WTC11 (cell line): ENCODE measurements at regions of chr11 and their contacts with region 1.

Region 1: GRCh38 chr11:73350908-73351636 is 25.1 kb upstream of the RELT start:
- DNase-seq: peak; percentile 50
- ATAC-seq: peak; percentile 40
- H3K4me3 Mint-ChIP-seq: no peak overlapping the region
- H3K27ac Mint-ChIP-seq: no peak overlapping the region
- H3K4me1 Mint-ChIP-seq: peaks cover 2% of the 10 kb centered on the region; the same call in 1 of the 2 replicates
- H3K27me3 Mint-ChIP-seq: no peaks in the 10 kb centered on the region
- CTCF ChIP-seq: peak; percentile 96

Region 2: GRCh38 chr11:73283276-73284030 is 67.6 kb before region 1 on chr11:
- CTCF ChIA-PET with region 1: interaction called, 20 read pairs
- POLR2A ChIA-PET with region 1: no interaction called
- DNase-seq: no peak
- ATAC-seq: no peak
- H3K4me3 Mint-ChIP-seq: no peak overlapping the region
- H3K27ac Mint-ChIP-seq: no peak overlapping the region; the same call in 1 of the 2 replicates
- H3K4me1 Mint-ChIP-seq: no peaks in the 10 kb centered on the region
- H3K27me3 Mint-ChIP-seq: no peaks in the 10 kb centered on the region; the same call in none of the 2 replicates
- CTCF ChIP-seq: no peak

Region 3: DNA sequence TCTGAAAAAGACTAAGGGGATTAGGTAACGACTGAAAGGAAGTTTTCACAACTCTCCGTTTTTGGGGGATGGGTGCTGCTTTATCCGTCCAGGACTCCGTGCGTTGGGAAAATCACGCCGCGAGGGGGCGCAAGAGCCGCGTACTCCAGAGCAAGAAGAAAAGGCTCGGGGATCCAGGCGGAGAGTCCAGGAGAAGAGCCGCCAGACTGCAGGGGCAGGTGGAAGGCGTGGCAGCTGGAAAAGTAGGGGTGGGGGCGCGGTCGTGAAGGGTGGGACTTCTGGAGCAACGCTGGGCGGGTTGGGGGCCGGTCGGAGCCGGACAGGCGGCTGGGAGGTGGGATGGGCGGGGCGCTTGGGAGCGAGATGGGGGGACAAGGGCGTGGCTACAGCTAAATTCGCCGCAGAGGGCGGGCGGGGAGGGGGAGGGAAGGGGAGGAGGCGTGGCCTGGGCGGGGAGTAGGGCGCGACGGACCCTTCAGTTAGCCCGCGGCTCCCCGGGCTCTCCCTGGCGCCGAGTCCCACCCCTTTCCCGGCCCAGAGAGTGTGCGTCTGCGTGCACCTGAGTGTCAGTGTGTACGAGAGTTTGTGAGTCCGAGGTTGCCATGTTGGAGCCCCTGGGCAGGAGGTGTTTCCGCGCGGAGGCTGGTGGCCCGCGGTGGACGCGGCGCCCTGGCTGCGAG is 43.6 kb before region 1 on chr11:
- CTCF ChIA-PET with region 1: interaction called, 127 read pairs
- POLR2A ChIA-PET with region 1: interaction called, 3 read pairs
- DNase-seq: peak; percentile 99
- ATAC-seq: peak; percentile 78
- H3K4me3 Mint-ChIP-seq: peak overlapping the region; percentile 76
- H3K27ac Mint-ChIP-seq: peak overlapping the region; percentile 85
- H3K4me1 Mint-ChIP-seq: peaks cover 16% of the 10 kb centered on the region
- H3K27me3 Mint-ChIP-seq: peaks cover 39% of the 10 kb centered on the region
- CTCF ChIP-seq: peak; percentile 57

Region 4: DNA sequence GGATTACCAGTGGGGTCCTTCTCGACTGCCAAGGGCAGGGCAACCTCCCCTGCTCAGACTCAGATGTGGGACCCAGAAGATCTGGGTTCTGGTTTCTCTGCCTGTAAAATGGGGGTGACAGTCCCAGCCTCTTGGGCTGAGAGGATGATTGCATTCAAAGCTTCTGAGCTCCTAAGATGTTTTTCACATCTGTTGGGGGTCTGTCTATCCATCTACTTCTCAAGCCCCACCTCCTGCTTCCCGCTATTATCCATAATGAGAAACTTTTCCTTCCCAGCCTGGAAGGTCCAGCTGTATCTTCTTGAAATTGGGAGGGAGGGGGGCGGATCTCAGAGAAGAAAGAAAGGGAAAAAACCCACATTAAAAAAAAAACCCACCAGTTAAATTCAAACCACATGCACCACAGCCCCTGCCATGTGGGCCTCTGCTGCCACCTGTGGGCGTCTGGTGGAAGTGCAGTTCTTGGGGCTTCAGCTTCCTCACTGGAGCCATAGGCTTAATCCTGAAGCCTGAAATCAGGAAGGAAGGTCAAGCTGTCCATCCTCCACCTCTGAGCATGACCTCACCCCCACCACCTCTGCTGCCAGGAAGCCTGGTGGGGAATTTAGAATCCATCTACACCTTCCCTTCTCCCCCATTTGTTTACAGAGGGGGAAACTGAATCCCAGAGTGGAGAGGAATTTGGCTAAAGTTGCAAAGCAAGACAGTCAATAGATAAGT is 15.7 kb before region 1 on chr11:
- CTCF ChIA-PET with region 1: interaction called, 52 read pairs
- POLR2A ChIA-PET with region 1: no interaction called
- DNase-seq: peak; percentile 94
- ATAC-seq: peak; percentile 38
- H3K4me3 Mint-ChIP-seq: no peak overlapping the region
- H3K27ac Mint-ChIP-seq: no peak overlapping the region
- H3K4me1 Mint-ChIP-seq: peaks cover 50% of the 10 kb centered on the region
- H3K27me3 Mint-ChIP-seq: peaks cover 64% of the 10 kb centered on the region
- CTCF ChIP-seq: peak; percentile 95

Region 5: DNA sequence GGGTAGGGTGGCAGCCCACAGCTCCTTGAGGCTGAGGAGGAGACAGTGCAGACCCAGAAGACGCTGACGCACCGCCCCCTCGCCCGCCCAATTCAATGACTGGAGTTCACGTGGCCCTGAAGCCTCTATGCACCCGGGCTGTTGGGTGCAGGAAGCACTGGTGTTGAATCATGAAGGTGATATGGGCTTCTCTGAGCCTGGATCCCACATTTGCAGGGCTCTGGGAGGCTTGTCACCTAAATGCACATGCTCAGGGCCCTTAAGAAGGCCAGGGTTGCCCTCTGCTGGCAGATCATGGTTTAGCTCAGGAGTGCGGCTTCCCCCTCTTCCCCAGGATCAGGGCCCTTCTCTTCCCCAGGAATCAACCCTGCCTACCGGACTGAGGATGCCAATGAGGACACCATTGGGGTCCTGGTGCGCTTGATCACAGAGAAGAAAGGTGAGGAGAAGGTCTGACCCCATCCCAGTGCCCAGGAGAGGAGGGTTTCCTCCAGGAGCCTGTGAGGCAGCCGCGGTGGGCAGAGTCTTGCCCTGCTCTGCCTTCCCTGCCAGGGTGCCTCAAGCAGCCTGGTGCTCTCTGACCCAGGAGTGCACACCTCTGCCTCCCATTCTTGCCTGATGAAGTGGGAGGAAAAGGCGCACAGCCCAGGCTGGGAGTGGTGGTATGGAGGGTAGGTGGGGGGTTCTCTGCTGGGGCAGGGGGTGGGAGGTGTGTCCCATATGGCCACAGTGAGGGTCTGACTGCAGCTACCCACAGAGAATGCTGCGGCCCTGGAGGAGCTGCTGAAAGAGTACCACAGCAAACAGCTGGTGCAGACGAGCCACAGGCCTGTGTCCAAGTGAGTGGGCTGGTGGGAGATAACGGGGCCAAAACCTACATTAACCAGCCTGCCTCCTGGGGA is 42.7 kb after region 1 on chr11:
- CTCF ChIA-PET with region 1: interaction called, 87 read pairs
- POLR2A ChIA-PET with region 1: no interaction called
- DNase-seq: peak; percentile 87
- ATAC-seq: peak; percentile 84
- H3K4me3 Mint-ChIP-seq: no peak overlapping the region
- H3K27ac Mint-ChIP-seq: no peak overlapping the region
- H3K4me1 Mint-ChIP-seq: no peaks in the 10 kb centered on the region
- H3K27me3 Mint-ChIP-seq: no peaks in the 10 kb centered on the region
- CTCF ChIP-seq: peak; percentile 68